Activated naive CD8-positive, alpha-beta T cell treated with anti-CD3 and anti-CD28 coated beads, Interleukin-2, amount 10 ng/mL, durations not matched to agents 7 days and 5 days (primary cell): ENCODE measurements at regions of chr3 and their contacts with region 1.

Region 1: GRCh38 chr3:66971891-66972551 is 26.1 kb upstream of the KBTBD8 start:
- DNase-seq: peak; percentile 61
- ATAC-seq: peak; percentile 90
- H3K4me3 Mint-ChIP-seq: peak overlapping the region; percentile 49
- H3K27ac Mint-ChIP-seq: peak overlapping the region; percentile 27
- H3K4me1 Mint-ChIP-seq: peaks cover 11% of the 10 kb centered on the region
- H3K27me3 Mint-ChIP-seq: peaks cover 2% of the 10 kb centered on the region

Region 2: GRCh38 chr3:66931291-66931690 is 40.7 kb before region 1 on chr3:
- POLR2A ChIA-PET with region 1: no interaction called
- DNase-seq: no peak
- ATAC-seq: no peak
- H3K4me3 Mint-ChIP-seq: no peak overlapping the region
- H3K27ac Mint-ChIP-seq: no peak overlapping the region
- H3K4me1 Mint-ChIP-seq: no peaks in the 10 kb centered on the region
- H3K27me3 Mint-ChIP-seq: peaks cover 22% of the 10 kb centered on the region

Region 3: DNA sequence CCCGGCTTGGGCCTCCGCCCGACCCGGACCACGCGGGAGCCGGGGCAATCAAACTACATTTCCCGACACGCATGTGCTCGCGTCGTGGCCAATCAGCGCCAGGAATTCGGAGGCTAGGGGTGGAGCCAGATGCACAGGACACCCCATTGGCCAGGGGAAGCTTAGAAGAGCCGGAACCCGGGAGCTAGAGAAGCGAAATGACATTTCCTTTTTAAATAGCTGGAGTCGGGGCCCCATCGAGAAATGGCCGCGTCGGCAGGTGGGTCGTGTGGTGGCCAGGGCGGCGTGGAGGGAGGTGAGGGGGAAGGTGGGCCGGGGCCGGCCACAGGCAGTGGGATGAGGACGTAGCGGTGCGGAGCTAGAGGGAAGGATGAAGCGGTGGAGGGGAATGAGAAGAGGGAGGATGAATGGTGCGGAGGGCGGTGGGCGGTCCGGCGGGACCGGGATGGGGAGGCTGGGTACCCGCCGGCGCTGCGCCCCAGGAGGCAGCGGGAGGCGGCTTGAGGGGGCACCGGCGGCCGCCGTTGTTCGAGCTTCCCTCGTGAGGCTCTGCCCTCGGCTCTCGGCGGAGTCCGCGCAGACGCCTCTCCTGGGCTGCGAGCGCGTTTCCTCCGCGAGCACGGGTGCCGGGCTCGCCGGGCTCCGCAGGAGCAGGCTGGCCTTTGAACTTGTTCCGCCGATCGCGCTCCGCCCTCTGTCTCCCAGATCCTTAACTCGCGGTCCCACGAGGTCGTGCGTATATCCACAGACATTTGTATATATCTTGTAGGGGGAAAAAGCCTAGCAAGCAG is 26.3 kb after region 1 on chr3 and contains the start of gene KBTBD8:
- POLR2A ChIA-PET with region 1: interaction called, 17 read pairs
- DNase-seq: peak; percentile 92
- ATAC-seq: peak; percentile 94
- H3K4me3 Mint-ChIP-seq: peak within 1 kb of the TSS; percentile 89
- H3K27ac Mint-ChIP-seq: peak within 1 kb of the TSS; percentile 89
- H3K4me1 Mint-ChIP-seq: peaks cover 15% of the 10 kb centered on the region
- H3K27me3 Mint-ChIP-seq: peaks cover 22% of the 10 kb centered on the region
- total RNA-seq, gene KBTBD8: 6.2 to 9.2 TPM

Region 4: GRCh38 chr3:67008388-67008787 is 36.4 kb after region 1 on chr3:
- POLR2A ChIA-PET with region 1: no interaction called
- DNase-seq: no peak
- ATAC-seq: no peak
- H3K4me3 Mint-ChIP-seq: no peak overlapping the region
- H3K27ac Mint-ChIP-seq: no peak overlapping the region
- H3K4me1 Mint-ChIP-seq: peaks cover 3% of the 10 kb centered on the region
- H3K27me3 Mint-ChIP-seq: no peaks in the 10 kb centered on the region